Left colon (tissue), 2 donors: ENCODE measurements at regions of chr6 and their contacts with region 1.

Region 1: DNA sequence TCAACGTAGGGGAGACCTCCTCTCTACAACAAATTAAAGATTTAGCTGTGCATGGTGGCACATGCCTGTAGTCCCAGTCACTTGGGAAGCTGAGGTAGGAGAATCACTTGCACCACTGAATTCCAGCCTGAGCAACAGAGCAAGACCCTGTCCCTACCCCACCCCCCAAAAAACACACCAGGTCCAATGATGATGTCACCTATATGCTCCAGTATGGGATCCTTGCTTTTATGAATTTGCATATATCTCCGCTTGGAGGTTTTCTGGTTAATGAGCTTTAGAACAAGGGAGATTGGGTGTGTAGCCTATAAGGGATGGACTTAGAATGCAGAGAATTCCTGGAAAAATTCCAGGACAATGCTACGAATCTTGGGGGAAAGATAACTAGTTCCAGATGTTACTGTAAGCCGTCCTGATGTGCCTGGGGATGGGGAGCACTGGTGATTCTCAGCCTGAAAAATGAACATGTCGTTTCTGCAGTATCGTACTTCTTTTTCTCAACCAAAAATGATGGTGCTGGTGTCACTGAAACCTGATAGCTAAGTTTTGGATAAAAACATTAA is 61.1 kb downstream of the ZBTB2 start:
- DNase-seq: no peak
- ATAC-seq: no peak

Region 2: DNA sequence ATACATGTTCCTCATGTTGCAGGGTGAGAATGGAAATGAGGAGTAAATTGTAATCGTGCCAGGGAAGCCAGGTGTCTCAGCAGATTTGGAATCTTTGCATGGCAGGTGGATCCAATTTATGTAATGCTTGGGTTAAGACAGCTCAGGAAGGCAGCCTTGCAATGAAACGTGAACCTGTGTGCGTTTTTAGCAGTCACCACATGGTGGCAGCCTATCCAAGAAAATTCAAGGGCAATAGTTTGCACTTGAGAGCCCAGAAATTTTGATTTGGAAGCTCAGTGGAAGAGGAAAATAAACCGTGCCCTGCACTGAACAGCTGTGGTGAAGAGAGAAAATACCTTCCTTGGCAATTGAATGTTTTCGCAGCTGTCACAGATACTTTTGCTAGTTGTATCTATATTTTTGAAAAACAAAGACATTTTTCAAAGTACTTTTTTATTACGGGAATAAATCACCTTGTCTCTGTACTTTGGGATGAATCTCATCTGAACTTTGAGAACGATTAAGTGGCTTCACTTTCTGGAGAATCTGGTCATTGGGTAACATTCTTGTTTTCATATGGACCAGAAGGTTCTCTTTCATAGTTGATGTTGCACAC is 438.2 kb before region 1 on chr6:
- intact Hi-C with region 1: loop called (anchors 5 kb)
- DNase-seq: peak; percentile 31 to 72
- ATAC-seq: peak; percentile 71

Region 3: DNA sequence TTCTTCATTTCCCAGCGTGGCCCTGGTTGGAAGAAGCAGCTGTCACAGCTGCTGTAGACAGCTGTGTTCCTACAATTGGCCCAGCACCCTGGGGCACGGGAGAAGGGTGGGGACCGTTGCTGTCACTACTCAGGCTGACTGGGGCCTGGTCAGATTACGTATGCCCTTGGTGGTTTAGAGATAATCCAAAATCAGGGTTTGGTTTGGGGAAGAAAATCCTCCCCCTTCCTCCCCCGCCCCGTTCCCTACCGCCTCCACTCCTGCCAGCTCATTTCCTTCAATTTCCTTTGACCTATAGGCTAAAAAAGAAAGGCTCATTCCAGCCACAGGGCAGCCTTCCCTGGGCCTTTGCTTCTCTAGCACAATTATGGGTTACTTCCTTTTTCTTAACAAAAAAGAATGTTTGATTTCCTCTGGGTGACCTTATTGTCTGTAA is 770.0 kb after region 1 on chr6:
- intact Hi-C with region 1: no loop called
- DNase-seq: no peak
- ATAC-seq: no peak